ENCODE measurements at regions of chr13 and their contacts with region 1.

Region 1: GRCh38 chr13:35672611-35673010 is 196.1 kb upstream of the MAB21L1 start:
- DNase-seq: no peak
- H3K4me3 ChIP-seq: no peak overlapping the region
- H3K27ac ChIP-seq: no peak overlapping the region
- H3K4me1 ChIP-seq: no peaks in the 10 kb centered on the region
- H3K27me3 ChIP-seq: no peaks in the 10 kb centered on the region
- CTCF ChIP-seq: no peak

Region 2: DNA sequence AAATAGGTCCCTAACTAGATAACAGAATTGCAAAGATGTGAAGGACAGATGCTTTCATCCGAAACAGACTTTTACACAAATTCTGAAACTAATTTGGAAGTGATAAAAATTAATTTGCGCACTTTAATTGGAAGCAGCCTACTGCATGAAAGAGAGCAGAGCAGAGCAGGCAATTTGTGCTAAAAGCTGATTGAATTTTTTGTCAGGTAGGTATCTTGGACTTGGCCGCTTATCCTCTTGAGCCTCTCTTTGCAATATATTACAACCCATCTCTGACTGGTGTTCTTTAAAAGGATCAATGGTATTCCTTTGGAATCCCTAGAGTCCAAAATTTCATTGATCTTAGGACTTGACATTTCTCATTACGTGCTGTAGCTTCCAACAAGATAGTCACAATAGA is 12.8 kb before region 1 on chr13:
- CTCF ChIA-PET with region 1: interaction called, 24 read pairs
- dilution Hi-C with region 1: no loop called
- in situ Hi-C with region 1: no loop called
- intact Hi-C with region 1: no loop called
- DNase-seq: no peak
- H3K4me3 ChIP-seq: no peak overlapping the region
- H3K27ac ChIP-seq: no peak overlapping the region
- H3K4me1 ChIP-seq: no peaks in the 10 kb centered on the region
- H3K27me3 ChIP-seq: no peaks in the 10 kb centered on the region
- CTCF ChIP-seq: no peak

Region 3: DNA sequence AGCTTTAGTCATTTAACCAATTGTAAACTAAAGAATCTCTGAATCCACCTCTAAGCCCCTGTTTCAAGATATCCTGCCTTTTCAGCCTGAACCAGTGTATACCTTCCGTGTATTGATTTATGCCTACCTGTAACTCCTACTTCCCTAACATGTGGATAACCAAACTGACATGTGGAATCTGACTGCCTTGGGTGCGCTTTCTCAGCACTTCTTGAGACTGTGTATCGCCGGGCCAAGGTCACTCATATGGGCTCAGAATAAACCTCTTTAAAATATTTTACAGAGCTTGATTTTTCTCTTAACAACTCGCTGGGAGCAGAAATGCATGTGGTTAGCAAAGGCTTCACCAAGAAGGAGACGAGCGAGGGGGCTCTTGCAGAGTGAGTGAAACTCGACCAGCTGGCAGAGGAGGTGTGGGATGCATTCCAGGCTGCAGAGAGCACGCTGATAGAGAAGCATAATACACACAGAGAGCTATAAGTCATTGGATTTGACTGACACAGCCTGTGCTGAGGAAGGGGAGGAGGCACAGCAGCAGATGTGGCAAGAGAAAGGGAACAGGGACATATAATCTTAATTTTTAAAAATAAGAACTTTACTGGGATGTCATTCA is 72.1 kb after region 1 on chr13:
- CTCF ChIA-PET with region 1: no interaction called
- dilution Hi-C with region 1: loop called (anchors 5 kb)
- in situ Hi-C with region 1: no loop called
- intact Hi-C with region 1: no loop called
- DNase-seq: no peak
- H3K4me3 ChIP-seq: no peak overlapping the region
- H3K27ac ChIP-seq: no peak overlapping the region
- H3K4me1 ChIP-seq: no peaks in the 10 kb centered on the region
- H3K27me3 ChIP-seq: no peaks in the 10 kb centered on the region
- CTCF ChIP-seq: no peak

Measured in mammary epithelial cell (primary cell).